Calu3 (cell line): ENCODE measurements at regions of chr3 and their contacts with region 1.

Region 1: DNA sequence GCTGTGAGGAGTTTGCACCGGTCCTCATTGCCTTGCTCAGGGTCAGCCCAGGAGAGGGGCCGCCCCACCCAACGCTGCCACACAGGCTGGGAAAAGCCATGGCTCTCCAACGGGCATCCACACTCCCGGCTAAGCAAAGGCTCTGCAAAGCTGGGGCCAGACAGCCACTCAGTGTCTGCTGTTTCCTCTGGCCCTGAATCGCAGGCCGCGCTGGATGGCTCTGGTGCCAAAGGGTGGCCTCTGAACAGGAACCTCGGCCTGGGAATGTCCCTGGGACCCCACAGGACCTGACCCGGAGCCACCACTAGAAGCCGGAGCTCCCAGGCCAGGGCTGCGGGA is 42.9 kb downstream of the RPN1 start:
- DNase-seq: no peak
- H3K4me3 Mint-ChIP-seq: peak overlapping the region; percentile 55
- H3K27ac Mint-ChIP-seq: no peak overlapping the region
- H3K4me1 Mint-ChIP-seq: no peaks in the 10 kb centered on the region
- H3K27me3 Mint-ChIP-seq: no peaks in the 10 kb centered on the region
- CTCF ChIP-seq: no peak

Region 2: GRCh38 chr3:128011140-128011539 is 596.5 kb before region 1 on chr3:
- CTCF ChIA-PET with region 1: no interaction called
- intact Hi-C with region 1: loop called (anchors 5 kb)
- DNase-seq: peak; percentile 94
- H3K4me3 Mint-ChIP-seq: no peak overlapping the region
- H3K27ac Mint-ChIP-seq: no peak overlapping the region
- H3K4me1 Mint-ChIP-seq: peaks cover 22% of the 10 kb centered on the region
- H3K27me3 Mint-ChIP-seq: peaks cover 32% of the 10 kb centered on the region
- CTCF ChIP-seq: peak; percentile 52

Region 3: DNA sequence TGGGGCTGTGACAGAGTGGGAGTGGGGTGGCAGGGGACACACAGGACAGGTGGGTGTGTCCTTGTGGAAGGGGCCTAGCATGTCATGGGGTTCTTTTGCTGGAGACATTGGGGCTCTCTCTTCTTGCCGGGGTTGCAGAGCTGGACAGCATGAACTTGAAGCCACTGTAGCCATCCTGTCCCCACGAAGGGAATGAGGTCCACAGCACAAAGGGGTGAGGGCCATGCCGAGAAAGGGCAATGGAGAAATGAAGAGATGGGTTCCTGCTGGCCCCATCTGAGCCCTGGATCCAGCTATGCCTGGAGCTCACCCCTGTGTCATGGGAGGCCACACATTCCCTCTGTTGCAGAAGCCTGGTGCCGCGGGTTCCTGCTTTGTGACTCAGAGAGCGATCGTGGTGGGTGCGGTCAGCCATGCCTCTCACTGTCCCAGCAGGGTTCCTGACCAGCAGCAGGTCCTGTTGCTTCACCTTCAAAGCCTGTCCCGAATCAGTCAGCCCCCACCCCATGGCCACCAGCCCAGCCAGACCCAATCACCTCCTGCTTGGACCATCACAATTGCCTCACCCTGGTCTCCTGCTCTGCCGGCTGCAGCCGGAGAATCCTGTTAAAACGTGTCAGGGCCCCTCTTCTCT is 191.0 kb before region 1 on chr3:
- CTCF ChIA-PET with region 1: no interaction called
- intact Hi-C with region 1: loop called (anchors 5 kb)
- DNase-seq: peak; percentile 90
- H3K4me3 Mint-ChIP-seq: no peak overlapping the region
- H3K27ac Mint-ChIP-seq: no peak overlapping the region
- H3K4me1 Mint-ChIP-seq: peaks cover 12% of the 10 kb centered on the region
- H3K27me3 Mint-ChIP-seq: peaks cover 23% of the 10 kb centered on the region
- CTCF ChIP-seq: no peak

Region 4: GRCh38 chr3:128617557-128618397 is 10.1 kb after region 1 on chr3:
- CTCF ChIA-PET with region 1: interaction called, 14 read pairs
- intact Hi-C with region 1: no loop called
- DNase-seq: peak; percentile 99
- H3K4me3 Mint-ChIP-seq: peak overlapping the region; percentile 86
- H3K27ac Mint-ChIP-seq: peak overlapping the region; percentile 62
- H3K4me1 Mint-ChIP-seq: peaks cover 28% of the 10 kb centered on the region
- H3K27me3 Mint-ChIP-seq: no peaks in the 10 kb centered on the region
- CTCF ChIP-seq: peak; percentile 88